CD8-positive, alpha-beta T cell (primary cell): ENCODE measurements at regions of chr4 and their contacts with region 1.

Region 1: DNA sequence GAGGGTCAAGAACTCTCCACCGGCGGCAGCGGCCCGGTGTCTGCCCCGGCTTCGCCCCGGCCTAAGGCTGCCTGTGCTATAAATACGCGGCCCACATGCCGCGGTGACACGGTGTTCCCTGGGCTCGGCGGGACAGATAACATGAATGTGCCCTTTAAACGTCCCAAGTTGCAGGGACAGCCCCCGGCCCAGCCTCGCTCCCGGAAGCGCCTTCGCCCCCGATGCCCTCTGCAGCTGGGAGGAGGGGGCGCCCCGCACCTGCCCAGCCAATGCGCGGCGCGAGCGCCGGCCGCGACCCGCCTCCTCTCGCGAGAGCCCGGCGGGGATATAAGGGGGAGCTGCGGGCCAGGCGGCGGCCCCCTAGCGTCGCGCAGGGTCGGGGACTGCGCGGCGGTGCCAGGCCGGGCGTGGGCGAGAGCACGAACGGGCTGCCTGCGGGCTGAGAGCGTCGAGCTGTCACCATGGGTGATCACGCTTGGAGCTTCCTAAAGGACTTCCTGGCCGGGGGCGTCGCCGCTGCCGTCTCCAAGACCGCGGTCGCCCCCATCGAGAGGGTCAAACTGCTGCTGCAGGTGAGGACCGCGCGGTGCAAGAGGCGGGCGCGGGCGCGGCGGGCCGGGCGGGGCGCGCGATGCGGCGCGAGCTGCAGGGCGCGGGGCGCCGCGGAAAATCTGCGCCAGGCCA is at the start of gene SLC25A4:
- DNase-seq: peak; percentile 73 to 94 (median 86)
- ATAC-seq: peak; percentile 93
- H3K4me3 ChIP-seq: peak within 1 kb of the TSS; percentile 65 to 84
- H3K4me3 Mint-ChIP-seq: peak within 1 kb of the TSS; percentile 91
- H3K27ac ChIP-seq: peak within 1 kb of the TSS; percentile 51 to 62
- H3K27ac Mint-ChIP-seq: peak within 1 kb of the TSS; percentile 91
- H3K4me1 ChIP-seq: peaks cover 15% of the 10 kb centered on the region
- H3K4me1 Mint-ChIP-seq: peaks cover 20% of the 10 kb centered on the region
- H3K27me3 ChIP-seq: no peaks in the 10 kb centered on the region
- H3K27me3 Mint-ChIP-seq: peaks cover 8% of the 10 kb centered on the region
- CTCF ChIP-seq: peak; percentile 59
- total RNA-seq, gene SLC25A4: 10.0 to 11.0 TPM

Region 2: GRCh38 chr4:184474263-184475095 is 668.6 kb before region 1 on chr4 and contains the start of gene IRF2:
- CTCF ChIA-PET with region 1: no interaction called
- POLR2A ChIA-PET with region 1: no interaction called
- intact Hi-C with region 1: loop called (anchors 2 to 10 kb)
- DNase-seq: peak; percentile 91 to 99 (median 95)
- ATAC-seq: peak; percentile 82
- H3K4me3 ChIP-seq: peak within 1 kb of the TSS; percentile 78 to 93
- H3K4me3 Mint-ChIP-seq: peak within 1 kb of the TSS; percentile 98
- H3K27ac ChIP-seq: peak within 1 kb of the TSS; percentile 94 to 95
- H3K27ac Mint-ChIP-seq: peak within 1 kb of the TSS; percentile 99
- H3K4me1 ChIP-seq: peaks cover 38% of the 10 kb centered on the region
- H3K4me1 Mint-ChIP-seq: peaks cover 67% of the 10 kb centered on the region
- H3K27me3 ChIP-seq: no peaks in the 10 kb centered on the region
- H3K27me3 Mint-ChIP-seq: no peaks in the 10 kb centered on the region
- CTCF ChIP-seq: no peak
- total RNA-seq, gene IRF2: 7.9 to 9.3 TPM

Region 3: GRCh38 chr4:184733654-184734524 is 409.2 kb before region 1 on chr4 and contains the start of gene CENPU:
- CTCF ChIA-PET with region 1: no interaction called
- POLR2A ChIA-PET with region 1: interaction called, 5 read pairs
- intact Hi-C with region 1: loop called in 1 of 2 experiments (anchors 2 kb)
- DNase-seq: peak; percentile 87 to 97 (median 94)
- ATAC-seq: peak; percentile 95
- H3K4me3 ChIP-seq: peak within 1 kb of the TSS; percentile 74 to 79
- H3K4me3 Mint-ChIP-seq: peak within 1 kb of the TSS; percentile 87
- H3K27ac ChIP-seq: peak within 1 kb of the TSS; percentile 2 to 43
- H3K27ac Mint-ChIP-seq: peak within 1 kb of the TSS; percentile 84
- H3K4me1 ChIP-seq: peaks cover 8% of the 10 kb centered on the region
- H3K4me1 Mint-ChIP-seq: peaks cover 18% of the 10 kb centered on the region
- H3K27me3 ChIP-seq: no peaks in the 10 kb centered on the region
- H3K27me3 Mint-ChIP-seq: no peaks in the 10 kb centered on the region
- CTCF ChIP-seq: no peak
- total RNA-seq, gene CENPU: 3.4 TPM

Region 4: GRCh38 chr4:185165605-185166063 is 22.6 kb after region 1 on chr4:
- CTCF ChIA-PET with region 1: no interaction called
- POLR2A ChIA-PET with region 1: interaction called, 4 read pairs
- intact Hi-C with region 1: loop called in 1 of 2 experiments (anchors 1 kb)
- DNase-seq: peak in 3 of 9 experiments; percentile 7 to 75 (median 57)
- ATAC-seq: peak; percentile 77
- H3K4me3 ChIP-seq: no peak overlapping the region
- H3K4me3 Mint-ChIP-seq: peak overlapping the region; percentile 5
- H3K27ac ChIP-seq: no peak overlapping the region
- H3K27ac Mint-ChIP-seq: no peak overlapping the region
- H3K4me1 ChIP-seq: peaks cover 19% of the 10 kb centered on the region
- H3K4me1 Mint-ChIP-seq: peaks cover 18% of the 10 kb centered on the region
- H3K27me3 ChIP-seq: no peaks in the 10 kb centered on the region
- H3K27me3 Mint-ChIP-seq: peaks cover 3% of the 10 kb centered on the region
- CTCF ChIP-seq: no peak

Region 5: DNA sequence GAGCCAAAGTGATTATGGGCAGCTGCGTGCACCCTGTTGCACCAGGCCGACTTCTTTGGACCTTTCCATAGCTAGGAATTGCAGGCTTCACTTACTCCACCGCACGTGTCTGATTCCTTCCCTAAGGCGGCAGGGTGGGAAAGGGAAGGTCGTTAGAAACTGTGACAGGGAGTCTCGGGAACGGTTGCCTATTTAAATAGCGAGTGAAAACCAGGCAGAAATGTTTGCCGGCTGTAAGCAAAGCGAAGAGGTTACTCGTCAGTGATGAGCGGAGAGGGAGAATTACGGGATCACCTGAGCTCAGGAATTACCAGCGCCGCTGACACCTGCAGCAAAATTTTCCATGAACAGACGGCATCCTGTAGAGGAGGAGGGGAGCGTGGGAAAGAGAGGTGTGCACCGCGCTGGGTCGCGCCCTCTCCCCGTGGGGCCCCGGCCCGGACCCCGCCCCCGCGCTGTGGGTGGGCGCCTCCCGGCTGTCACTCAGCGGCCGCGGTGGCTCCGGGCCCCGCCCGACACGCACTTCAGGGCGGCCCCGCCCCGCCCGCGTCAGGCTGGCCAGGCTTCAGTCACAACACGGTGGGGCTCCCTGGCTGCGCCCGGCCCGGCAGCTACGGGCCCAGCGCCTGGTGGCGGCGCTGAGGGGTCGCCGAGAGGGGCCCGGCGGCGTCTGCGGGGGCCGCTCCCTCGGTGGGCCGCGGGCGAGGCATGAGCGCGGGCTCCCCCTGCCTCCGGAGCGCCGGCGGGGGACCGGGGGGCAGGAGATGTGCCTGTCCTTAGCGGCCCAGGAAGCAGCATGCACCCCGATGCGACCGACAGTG is 66.2 kb after region 1 on chr4 and contains the start of gene SNX25:
- CTCF ChIA-PET with region 1: no interaction called
- POLR2A ChIA-PET with region 1: interaction called, 8 read pairs
- intact Hi-C with region 1: loop called in 1 of 2 experiments (anchors 1 kb)
- DNase-seq: peak; percentile 68 to 92 (median 89)
- ATAC-seq: peak; percentile 92
- H3K4me3 ChIP-seq: peak within 1 kb of the TSS; percentile 60 to 71
- H3K4me3 Mint-ChIP-seq: peak within 1 kb of the TSS; percentile 92
- H3K27ac ChIP-seq: peak within 1 kb of the TSS; percentile 34 to 48
- H3K27ac Mint-ChIP-seq: peak within 1 kb of the TSS; percentile 84
- H3K4me1 ChIP-seq: peaks cover 33% of the 10 kb centered on the region
- H3K4me1 Mint-ChIP-seq: peaks cover 50% of the 10 kb centered on the region
- H3K27me3 ChIP-seq: no peaks in the 10 kb centered on the region
- H3K27me3 Mint-ChIP-seq: no peaks in the 10 kb centered on the region
- CTCF ChIP-seq: no peak
- total RNA-seq, gene SNX25: 18.0 to 18.2 TPM

Region 6: DNA sequence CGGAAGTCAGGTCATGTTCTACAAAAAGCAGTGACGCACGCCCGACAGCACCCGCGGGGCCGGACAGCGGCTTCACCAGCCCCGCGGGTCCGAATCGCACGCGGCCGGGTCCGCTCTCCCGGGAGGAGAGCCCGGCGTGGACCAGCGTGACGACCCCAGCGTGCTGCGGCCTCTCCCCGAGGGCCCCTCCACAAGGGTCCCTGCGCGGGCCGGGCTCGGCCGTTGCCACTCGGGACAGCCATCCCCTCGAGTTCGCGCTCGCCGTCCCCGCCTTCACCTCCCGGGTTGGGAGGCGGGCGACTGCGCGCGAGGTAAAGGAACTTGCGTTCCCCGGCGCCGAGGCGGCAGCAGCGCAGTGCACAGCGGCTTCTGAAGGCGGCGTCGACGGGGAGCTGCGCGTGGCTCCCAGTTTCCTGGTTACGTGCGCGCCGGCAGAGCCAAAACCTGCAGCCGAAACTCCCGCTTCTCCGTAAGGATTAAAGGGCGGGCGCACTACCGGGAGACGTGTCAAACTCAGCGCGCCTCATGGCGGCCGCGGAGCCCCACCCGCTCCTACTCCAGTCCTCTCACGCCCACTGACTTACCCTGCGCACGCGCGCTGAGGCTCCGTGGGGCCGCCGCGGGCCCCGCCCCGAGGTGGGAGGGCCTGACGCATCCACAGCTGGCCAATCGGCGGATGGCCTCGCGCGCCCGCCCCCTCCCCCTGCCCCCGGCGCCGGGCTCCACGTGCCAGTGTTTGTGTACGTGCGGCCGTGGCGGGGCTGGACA is 253.1 kb after region 1 on chr4:
- CTCF ChIA-PET with region 1: no interaction called
- POLR2A ChIA-PET with region 1: interaction called, 7 read pairs
- intact Hi-C with region 1: loop called in 1 of 2 experiments (anchors 5 kb)
- DNase-seq: peak; percentile 91 to 98 (median 95)
- ATAC-seq: peak; percentile 92
- H3K4me3 ChIP-seq: peak overlapping the region; percentile 73 to 95
- H3K4me3 Mint-ChIP-seq: peak overlapping the region; percentile 95
- H3K27ac ChIP-seq: peak overlapping the region; percentile 98 to 99
- H3K27ac Mint-ChIP-seq: peak overlapping the region; percentile 99
- H3K4me1 ChIP-seq: peaks cover 16% of the 10 kb centered on the region
- H3K4me1 Mint-ChIP-seq: peaks cover 20% of the 10 kb centered on the region
- H3K27me3 ChIP-seq: no peaks in the 10 kb centered on the region
- H3K27me3 Mint-ChIP-seq: no peaks in the 10 kb centered on the region
- CTCF ChIP-seq: no peak

Region 7: DNA sequence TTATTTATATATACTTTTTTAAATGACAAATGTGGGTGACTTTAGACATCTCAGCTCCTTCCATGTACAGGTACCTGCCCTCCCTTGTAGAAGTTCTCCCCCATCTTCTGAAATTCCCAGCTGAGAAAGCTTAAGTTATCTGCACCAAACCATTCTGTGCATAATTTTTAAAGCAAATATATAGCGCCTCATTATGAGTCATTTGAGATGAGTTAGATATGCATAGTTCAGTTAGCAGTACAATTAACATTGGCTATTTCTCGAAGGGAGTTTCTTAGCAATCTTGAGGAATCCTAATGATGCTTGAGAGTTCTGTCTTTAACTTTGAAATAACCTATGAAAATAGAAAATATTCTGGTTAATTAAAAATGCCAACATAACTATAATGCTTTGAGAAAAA is 302.2 kb after region 1 on chr4:
- CTCF ChIA-PET with region 1: no interaction called
- POLR2A ChIA-PET with region 1: no interaction called
- intact Hi-C with region 1: no loop called
- DNase-seq: no peak
- ATAC-seq: no peak
- H3K4me3 ChIP-seq: no peak overlapping the region
- H3K4me3 Mint-ChIP-seq: no peak overlapping the region
- H3K27ac ChIP-seq: no peak overlapping the region
- H3K27ac Mint-ChIP-seq: no peak overlapping the region
- H3K4me1 ChIP-seq: no peaks in the 10 kb centered on the region
- H3K4me1 Mint-ChIP-seq: no peaks in the 10 kb centered on the region
- H3K27me3 ChIP-seq: no peaks in the 10 kb centered on the region
- H3K27me3 Mint-ChIP-seq: peaks cover 10% of the 10 kb centered on the region
- CTCF ChIP-seq: no peak